ENCODE measurements at regions of chr2 and their contacts with region 1.

Region 1: DNA sequence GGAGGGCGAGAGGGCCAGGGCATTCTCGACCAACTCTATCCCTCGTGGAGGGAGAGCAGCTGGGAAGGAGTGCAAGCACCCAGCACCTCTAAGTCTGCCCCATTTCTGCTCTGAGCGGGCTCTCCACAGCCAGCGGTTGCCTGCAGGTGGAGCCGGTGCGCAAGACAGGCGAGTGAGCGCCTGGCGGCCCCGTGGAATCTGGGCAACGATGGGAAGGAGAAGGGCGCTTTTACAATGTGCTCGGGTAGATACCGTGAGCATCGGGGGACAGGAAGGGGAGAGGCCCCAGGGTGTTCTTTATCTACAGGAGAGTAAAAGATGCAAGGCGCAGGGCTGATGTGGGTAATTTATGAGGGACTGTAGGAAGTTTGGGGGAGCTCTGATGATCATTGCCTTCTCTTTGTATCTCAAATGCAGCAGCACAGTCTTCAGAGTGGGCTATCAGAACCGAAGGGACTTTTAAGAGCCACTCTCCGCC is 867 bp upstream of the TTL start:
- DNase-seq: peak; percentile 79
- ATAC-seq: peak; percentile 79
- H3K4me3 ChIP-seq: peak overlapping the region; percentile 94
- H3K27ac ChIP-seq: peak overlapping the region; percentile 58
- H3K4me1 ChIP-seq: peaks cover 2% of the 10 kb centered on the region; the same call in 1 of the 2 replicates
- H3K27me3 ChIP-seq: no peaks in the 10 kb centered on the region
- CTCF ChIP-seq: peak; percentile 85
- POLR2A ChIP-seq: no peak
- RAD21 ChIP-seq: peak; percentile 73

Region 2: GRCh38 chr2:112254466-112255239 is 226.4 kb before region 1 on chr2 and contains the start of gene ZC3H8:
- CTCF ChIA-PET with region 1: no interaction called
- POLR2A ChIA-PET with region 1: no interaction called
- dilution Hi-C with region 1: no loop called
- in situ Hi-C with region 1: no loop called
- intact Hi-C with region 1: loop called (anchors 5 kb)
- DNase-seq: peak; percentile 75
- ATAC-seq: peak; percentile 99
- H3K4me3 ChIP-seq: peak within 1 kb of the TSS; percentile 57
- H3K27ac ChIP-seq: peak within 1 kb of the TSS; percentile 15; the same call in 1 of the 2 replicates
- H3K4me1 ChIP-seq: no peaks in the 10 kb centered on the region
- H3K27me3 ChIP-seq: no peaks in the 10 kb centered on the region
- CTCF ChIP-seq: no peak
- POLR2A ChIP-seq: no peak; the same call in 1 of the 2 replicates
- RAD21 ChIP-seq: no peak
- total RNA-seq, gene ZC3H8: 0.18 and 1.7 TPM in 2 replicates

Region 3: GRCh38 chr2:112542123-112542983 is 61.3 kb after region 1 on chr2 and contains the start of gene POLR1B:
- CTCF ChIA-PET with region 1: no interaction called
- POLR2A ChIA-PET with region 1: no interaction called
- dilution Hi-C with region 1: no loop called
- in situ Hi-C with region 1: no loop called
- intact Hi-C with region 1: loop called (anchors 2 kb)
- DNase-seq: peak; percentile 78
- ATAC-seq: peak; percentile 87
- H3K4me3 ChIP-seq: peak within 1 kb of the TSS; percentile 76
- H3K27ac ChIP-seq: peak within 1 kb of the TSS; percentile 80
- H3K4me1 ChIP-seq: no peaks in the 10 kb centered on the region
- H3K27me3 ChIP-seq: no peaks in the 10 kb centered on the region
- CTCF ChIP-seq: no peak
- POLR2A ChIP-seq: no peak
- RAD21 ChIP-seq: no peak
- total RNA-seq, gene POLR1B: 22.8 and 24.6 TPM in 2 replicates

Region 4: GRCh38 chr2:112579241-112579640 is 98.2 kb after region 1 on chr2:
- CTCF ChIA-PET with region 1: interaction called, 6 read pairs
- POLR2A ChIA-PET with region 1: no interaction called
- dilution Hi-C with region 1: no loop called
- in situ Hi-C with region 1: no loop called
- intact Hi-C with region 1: loop called (anchors 1 kb)
- DNase-seq: peak; percentile 92
- ATAC-seq: peak; percentile 19
- H3K4me3 ChIP-seq: no peak overlapping the region
- H3K27ac ChIP-seq: no peak overlapping the region
- H3K4me1 ChIP-seq: no peaks in the 10 kb centered on the region
- H3K27me3 ChIP-seq: no peaks in the 10 kb centered on the region
- CTCF ChIP-seq: peak; percentile 34
- POLR2A ChIP-seq: no peak
- RAD21 ChIP-seq: no peak

Region 5: GRCh38 chr2:112626604-112627059 is 145.5 kb after region 1 on chr2:
- CTCF ChIA-PET with region 1: no interaction called
- POLR2A ChIA-PET with region 1: interaction called, 11 read pairs
- dilution Hi-C with region 1: no loop called
- in situ Hi-C with region 1: no loop called
- intact Hi-C with region 1: no loop called
- DNase-seq: peak; percentile 68
- ATAC-seq: peak; percentile 54
- H3K4me3 ChIP-seq: no peak overlapping the region; the same call in 1 of the 2 replicates
- H3K27ac ChIP-seq: peak overlapping the region; percentile 79
- H3K4me1 ChIP-seq: peaks cover 29% of the 10 kb centered on the region
- H3K27me3 ChIP-seq: no peaks in the 10 kb centered on the region
- CTCF ChIP-seq: peak; percentile 79
- POLR2A ChIP-seq: no peak; the same call in 1 of the 2 replicates
- RAD21 ChIP-seq: peak; percentile 86

Region 6: DNA sequence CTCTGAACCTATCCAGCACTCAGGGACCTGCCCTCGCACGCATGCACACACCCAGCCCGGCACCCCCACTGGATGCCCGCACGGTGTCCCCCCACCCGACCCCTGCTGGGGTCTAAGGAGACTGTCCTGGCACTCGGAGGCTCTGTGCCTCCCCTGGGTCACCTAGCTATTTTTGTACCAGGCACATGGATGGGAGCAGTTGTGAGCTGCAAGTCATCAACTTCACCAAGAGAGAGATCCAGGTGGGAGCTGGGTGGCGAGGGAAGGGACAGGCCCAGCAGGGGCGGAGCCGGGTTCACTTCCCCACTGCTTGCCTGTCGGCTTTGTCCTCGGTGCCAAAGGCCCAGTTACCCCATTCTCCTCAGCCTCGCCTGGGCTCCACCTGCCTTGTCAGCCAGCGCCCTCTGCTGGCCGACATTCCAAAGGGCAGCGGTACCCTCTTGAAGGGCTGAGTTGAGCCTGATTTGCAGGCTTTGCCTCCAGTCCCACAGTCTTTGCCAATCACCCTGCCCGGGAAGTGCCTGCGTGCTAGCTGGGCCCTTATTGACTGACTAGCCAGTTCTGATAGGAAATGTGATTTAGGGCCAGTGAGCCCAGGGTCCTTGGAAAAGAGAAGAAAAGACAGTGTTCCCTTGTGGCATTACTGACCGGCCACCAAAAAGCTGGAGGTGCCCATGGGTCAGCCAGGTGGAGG is 245.6 kb after region 1 on chr2:
- CTCF ChIA-PET with region 1: no interaction called
- POLR2A ChIA-PET with region 1: no interaction called
- dilution Hi-C with region 1: no loop called
- in situ Hi-C with region 1: no loop called
- intact Hi-C with region 1: loop called (anchors 1 kb)
- DNase-seq: peak; percentile 86
- ATAC-seq: peak; percentile 96
- H3K4me3 ChIP-seq: no peak overlapping the region
- H3K27ac ChIP-seq: no peak overlapping the region
- H3K4me1 ChIP-seq: peaks cover 1% of the 10 kb centered on the region; the same call in 1 of the 2 replicates
- H3K27me3 ChIP-seq: no peaks in the 10 kb centered on the region
- CTCF ChIP-seq: peak; percentile 99
- POLR2A ChIP-seq: peak; percentile 49; the same call in 1 of the 2 replicates
- RAD21 ChIP-seq: peak; percentile 100